Activated B cell treated with CpG ODN at 0.5 μM for 24 hours (primary cell): ENCODE measurements at regions of chr3 and their contacts with region 1.

Region 1: GRCh38 chr3:8501371-8502131 is at the start of gene LMCD1:
- DNase-seq: peak; percentile 64
- ATAC-seq: peak; percentile 97
- H3K4me3 Mint-ChIP-seq: peak within 1 kb of the TSS; percentile 88
- H3K27ac Mint-ChIP-seq: peak within 1 kb of the TSS; percentile 75
- H3K4me1 Mint-ChIP-seq: peaks cover 46% of the 10 kb centered on the region
- H3K27me3 Mint-ChIP-seq: peaks cover 3% of the 10 kb centered on the region
- CTCF ChIP-seq: no peak
- total RNA-seq, gene LMCD1: 5.4 and 6.0 TPM in 2 replicates

Region 2: DNA sequence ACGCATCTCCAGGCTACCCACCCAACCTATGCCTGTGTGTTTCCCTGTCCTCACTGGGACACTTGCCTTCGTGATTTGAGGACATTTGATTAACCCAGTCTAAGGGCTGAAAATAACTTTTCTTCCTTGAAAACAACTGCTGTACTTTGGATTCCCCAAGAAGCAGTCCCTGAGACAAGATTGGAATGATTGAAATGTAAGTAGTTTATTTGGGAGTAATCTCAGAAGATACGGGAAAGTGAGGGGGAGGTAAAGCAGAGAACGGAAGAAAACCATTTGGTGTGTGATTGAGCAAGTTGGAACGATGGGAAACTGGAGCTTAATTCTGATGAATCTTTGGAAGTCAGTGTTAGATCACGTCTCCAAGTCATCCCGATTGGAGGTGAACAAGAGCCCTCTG is 143.7 kb before region 1 on chr3:
- CTCF ChIA-PET with region 1: no interaction called
- POLR2A ChIA-PET with region 1: no interaction called
- intact Hi-C with region 1: loop called (anchors 1 kb)
- DNase-seq: no peak
- ATAC-seq: no peak
- H3K4me3 Mint-ChIP-seq: no peak overlapping the region
- H3K27ac Mint-ChIP-seq: peak overlapping the region; percentile 43
- H3K4me1 Mint-ChIP-seq: peaks cover 27% of the 10 kb centered on the region
- H3K27me3 Mint-ChIP-seq: no peaks in the 10 kb centered on the region
- CTCF ChIP-seq: no peak

Region 3: DNA sequence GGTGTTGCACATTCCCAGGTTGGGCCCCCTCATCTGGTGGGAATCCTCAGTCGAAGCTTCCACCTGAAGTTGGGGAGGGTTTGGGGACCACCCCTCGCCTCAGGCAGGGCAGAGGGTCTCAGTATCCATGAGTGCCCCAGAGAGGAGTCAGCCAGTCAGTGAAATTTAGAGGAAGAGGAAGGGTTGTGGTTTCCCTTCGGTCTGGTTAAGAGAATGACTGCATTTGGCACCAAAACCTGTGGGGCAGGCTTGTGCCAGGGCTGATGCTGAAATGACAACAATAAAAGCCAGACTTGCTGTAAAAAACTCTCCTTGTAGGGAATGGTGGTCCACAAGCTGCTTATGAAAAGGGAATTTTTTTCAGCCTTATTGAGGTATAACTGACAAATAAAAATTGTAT is 22.7 kb after region 1 on chr3:
- CTCF ChIA-PET with region 1: no interaction called
- POLR2A ChIA-PET with region 1: no interaction called
- intact Hi-C with region 1: no loop called
- DNase-seq: no peak
- ATAC-seq: no peak
- H3K4me3 Mint-ChIP-seq: no peak overlapping the region
- H3K27ac Mint-ChIP-seq: no peak overlapping the region
- H3K4me1 Mint-ChIP-seq: peaks cover 2% of the 10 kb centered on the region
- H3K27me3 Mint-ChIP-seq: no peaks in the 10 kb centered on the region
- CTCF ChIP-seq: no peak